ENCODE measurements at regions of chr16 and their contacts with region 1.

Region 1: DNA sequence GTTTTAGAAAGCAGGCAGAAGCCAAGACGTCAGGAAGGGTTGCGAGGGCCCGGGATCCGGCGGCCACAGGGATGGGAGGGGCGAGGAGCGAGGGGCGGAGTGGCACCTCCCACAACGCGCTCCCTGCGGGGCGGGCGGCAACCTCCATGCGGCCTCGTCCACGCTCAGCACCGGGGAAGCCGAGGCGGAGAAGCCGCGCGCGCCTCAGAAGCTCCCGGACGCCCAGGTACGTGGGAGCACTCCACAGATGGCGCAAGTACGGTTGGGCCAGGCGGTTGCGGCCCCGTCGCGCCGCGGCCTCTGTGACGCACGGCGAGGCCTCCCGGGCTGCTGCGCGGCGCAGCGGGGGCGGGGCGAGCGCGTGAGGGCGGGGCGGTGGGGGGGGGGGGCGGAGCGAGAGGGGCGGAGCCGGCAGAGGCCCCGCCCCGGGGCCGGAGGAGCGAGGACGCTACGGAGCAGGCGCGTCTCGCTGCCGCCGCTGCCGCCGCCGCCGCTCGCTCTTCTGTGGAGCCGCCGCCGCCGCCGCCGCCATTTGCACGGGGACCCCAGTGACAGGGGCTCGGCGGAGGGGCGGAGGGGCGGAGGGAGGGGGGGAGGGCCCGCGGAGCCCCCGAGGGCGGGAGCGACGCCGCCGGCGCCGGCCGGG is at the start of gene TENT4B:
- DNase-seq: peak; percentile 92
- ATAC-seq: peak; percentile 96
- total RNA-seq, gene TENT4B: 7.7 TPM

Region 2: DNA sequence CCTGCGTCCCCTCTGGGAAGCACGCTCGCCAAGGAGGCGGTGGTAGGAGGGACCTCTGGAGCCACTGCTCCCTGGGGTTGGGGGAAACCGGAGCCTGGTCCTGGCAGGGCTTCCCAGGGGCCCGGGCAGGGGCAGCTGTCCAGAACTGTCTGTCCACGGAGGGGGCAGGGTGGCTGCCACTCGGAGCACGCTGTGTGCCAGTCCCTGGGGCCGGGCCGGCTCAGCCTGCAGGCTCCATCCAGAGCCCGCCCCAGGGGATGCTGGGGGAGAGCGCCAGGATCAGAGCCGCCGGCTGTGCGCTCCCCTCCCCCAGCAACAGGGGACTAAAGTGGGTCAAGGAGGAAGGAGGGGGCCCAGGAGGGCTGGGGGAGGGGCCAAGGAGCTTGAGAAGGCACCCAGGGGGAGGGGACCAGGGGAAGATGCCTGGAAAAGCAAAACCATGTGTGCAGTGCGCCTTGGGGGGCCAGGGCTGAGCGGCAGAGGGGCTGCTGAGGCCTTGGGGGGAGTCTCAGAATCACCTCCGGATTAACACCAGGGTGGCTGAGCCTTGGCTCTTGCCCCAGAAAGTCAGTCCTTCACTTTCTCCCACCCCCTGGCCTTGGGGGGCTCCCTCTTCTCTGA is 318.3 kb before region 1 on chr16:
- intact Hi-C with region 1: no loop called
- DNase-seq: peak; percentile 83
- ATAC-seq: peak; percentile 51

Region 3: DNA sequence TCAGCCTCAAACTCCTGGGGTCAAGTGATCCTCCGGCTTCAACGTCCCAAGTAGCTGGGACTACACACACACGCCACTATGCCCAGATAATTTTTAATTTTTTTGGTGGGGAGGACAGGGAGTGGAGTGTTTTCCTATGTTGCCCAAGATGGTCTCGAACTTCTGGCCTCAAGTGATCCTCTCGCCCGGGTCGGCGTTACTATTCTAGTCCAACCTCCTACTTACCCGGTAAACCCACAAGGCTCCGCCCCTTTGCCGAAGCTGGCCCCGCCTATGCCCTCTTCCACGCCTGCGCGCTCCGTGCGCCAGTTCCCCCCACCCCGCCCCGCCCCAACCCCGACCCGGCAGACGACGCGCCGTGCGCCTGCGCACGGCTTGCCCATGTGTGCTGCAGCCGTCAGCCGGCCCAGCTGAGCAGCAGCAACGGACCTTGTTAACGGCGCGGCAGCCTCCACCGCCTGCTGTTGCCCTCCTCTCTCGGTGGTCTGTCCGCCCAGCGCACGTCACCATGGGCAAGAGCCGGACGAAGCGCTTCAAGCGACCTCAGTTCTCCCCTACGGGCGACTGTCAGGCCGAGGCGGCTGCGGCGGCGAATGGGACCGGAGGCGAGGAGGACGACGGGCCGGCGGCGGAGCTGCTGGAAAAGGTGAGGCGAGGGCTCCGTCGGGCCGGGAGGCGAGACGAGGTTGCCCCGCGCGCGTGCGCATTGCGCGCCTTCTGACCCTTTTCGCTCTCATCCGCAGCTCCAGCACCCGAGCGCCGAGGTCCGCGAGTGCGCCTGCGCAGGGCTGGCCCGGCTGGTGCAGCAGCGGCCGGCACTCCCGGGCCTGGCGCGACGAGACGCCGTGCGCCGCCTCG is 87.1 kb before region 1 on chr16 and contains the start of gene HEATR3:
- intact Hi-C with region 1: loop called (anchors 5 kb)
- DNase-seq: peak; percentile 95
- ATAC-seq: peak; percentile 98
- total RNA-seq, gene HEATR3: 9.9 TPM

Region 4: DNA sequence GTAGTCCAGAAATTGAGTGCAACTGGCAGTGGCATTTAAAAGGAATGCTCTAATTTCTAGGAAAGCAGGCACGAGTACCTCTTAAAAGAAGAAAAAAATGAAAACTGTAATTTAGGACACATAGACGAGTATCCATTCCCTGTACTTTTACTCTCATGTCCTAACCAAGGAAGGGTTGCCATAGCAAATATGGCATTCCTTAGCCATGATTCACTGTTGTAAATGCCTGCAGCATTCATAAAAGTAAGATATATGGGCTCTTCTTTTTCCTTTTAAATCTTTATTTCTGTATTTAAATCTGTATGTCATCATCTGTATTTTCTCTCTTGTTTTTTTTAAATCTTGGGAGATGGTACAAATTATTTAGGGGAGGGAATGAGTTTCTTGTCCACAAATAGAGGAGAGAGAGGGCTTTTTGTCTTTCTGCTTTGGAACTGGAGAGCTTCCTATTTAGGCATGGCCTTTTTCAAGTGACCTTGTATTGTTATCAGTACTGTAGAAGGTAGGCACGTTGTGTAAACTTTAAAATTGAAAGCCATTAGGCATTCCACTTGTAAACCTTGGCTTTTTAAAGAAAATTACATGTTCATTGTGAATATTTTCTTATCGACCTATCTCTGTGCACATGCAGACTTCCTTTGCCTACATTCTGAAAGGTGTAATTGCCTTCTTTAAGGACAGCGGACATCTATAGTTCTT is 50.1 kb after region 1 on chr16:
- intact Hi-C with region 1: loop called (anchors 5 kb)
- DNase-seq: no peak
- ATAC-seq: peak; percentile 63

Measured in Right ventricle myocardium superior (tissue), 1 donor.